ENCODE measurements at regions of chr15 and their contacts with region 1.

Region 1: DNA sequence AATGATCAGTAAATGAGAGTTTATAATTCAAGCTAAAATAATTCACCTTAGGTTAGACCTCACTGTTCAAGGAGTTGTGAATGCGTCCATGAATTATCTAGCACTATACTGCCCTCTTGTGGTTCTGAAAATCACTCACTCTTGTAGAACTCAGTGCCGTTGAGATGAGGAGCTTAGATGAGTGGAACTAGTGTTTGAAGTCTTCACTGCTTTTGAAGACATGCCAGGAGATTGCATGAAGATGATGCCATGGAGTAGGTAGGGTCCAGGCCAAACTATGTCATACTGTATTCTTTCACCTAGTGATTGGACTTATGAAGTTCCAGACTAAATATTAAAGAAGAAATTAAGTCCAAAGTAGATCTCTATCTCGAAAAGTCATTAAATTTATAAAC is 28.8 kb downstream of the LYSMD4 start:
- DNase-seq: peak in 2 of 6 donors; percentile 37 to 50
- ATAC-seq: peak; percentile 83 to 91 (median 86)
- H3K4me3 ChIP-seq: peak overlapping the region in 1 of 4 donors; percentile 11
- H3K27ac ChIP-seq: peak overlapping the region in 3 of 4 donors; percentile 76 to 82 (median 77)
- H3K4me1 ChIP-seq: peaks cover 5 to 27% (median 25%) of the 10 kb centered on the region in 3 donors
- H3K27me3 ChIP-seq: no peaks in the 10 kb centered on the region
- CTCF ChIP-seq: peak; percentile 62 to 74 (median 68)

Region 2: GRCh38 chr15:99282121-99282520 is 422.3 kb before region 1 on chr15:
- intact Hi-C with region 1: loop called in 1 of 3 experiments (anchors 10 kb)
- DNase-seq: no peak
- ATAC-seq: no peak
- H3K4me3 ChIP-seq: no peak overlapping the region
- H3K27ac ChIP-seq: no peak overlapping the region
- H3K4me1 ChIP-seq: no peaks in the 10 kb centered on the region
- H3K27me3 ChIP-seq: no peaks in the 10 kb centered on the region
- CTCF ChIP-seq: no peak

Region 3: DNA sequence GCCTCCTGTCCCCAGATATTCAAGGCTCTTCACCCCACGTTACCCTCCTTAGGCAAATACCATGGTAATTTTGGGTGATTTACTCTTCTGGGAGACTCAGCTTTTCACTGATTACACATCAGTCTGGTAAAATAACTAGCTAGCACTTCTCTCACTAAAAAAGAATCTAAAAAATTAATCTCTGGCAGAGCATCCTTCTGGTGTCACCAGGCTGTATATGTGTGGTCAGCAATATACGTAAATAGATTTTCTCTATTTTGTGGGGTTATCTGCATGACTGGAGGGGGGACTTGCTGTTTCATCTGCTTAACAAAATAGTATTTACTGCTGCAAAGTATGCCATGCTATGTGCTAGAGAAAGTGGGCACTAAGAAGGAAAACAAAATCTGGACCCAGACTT is 408.1 kb before region 1 on chr15:
- intact Hi-C with region 1: loop called in 1 of 3 experiments (anchors 10 kb)
- DNase-seq: no peak
- ATAC-seq: no peak
- H3K4me3 ChIP-seq: no peak overlapping the region
- H3K27ac ChIP-seq: no peak overlapping the region
- H3K4me1 ChIP-seq: no peaks in the 10 kb centered on the region
- H3K27me3 ChIP-seq: no peaks in the 10 kb centered on the region
- CTCF ChIP-seq: no peak

Region 4: DNA sequence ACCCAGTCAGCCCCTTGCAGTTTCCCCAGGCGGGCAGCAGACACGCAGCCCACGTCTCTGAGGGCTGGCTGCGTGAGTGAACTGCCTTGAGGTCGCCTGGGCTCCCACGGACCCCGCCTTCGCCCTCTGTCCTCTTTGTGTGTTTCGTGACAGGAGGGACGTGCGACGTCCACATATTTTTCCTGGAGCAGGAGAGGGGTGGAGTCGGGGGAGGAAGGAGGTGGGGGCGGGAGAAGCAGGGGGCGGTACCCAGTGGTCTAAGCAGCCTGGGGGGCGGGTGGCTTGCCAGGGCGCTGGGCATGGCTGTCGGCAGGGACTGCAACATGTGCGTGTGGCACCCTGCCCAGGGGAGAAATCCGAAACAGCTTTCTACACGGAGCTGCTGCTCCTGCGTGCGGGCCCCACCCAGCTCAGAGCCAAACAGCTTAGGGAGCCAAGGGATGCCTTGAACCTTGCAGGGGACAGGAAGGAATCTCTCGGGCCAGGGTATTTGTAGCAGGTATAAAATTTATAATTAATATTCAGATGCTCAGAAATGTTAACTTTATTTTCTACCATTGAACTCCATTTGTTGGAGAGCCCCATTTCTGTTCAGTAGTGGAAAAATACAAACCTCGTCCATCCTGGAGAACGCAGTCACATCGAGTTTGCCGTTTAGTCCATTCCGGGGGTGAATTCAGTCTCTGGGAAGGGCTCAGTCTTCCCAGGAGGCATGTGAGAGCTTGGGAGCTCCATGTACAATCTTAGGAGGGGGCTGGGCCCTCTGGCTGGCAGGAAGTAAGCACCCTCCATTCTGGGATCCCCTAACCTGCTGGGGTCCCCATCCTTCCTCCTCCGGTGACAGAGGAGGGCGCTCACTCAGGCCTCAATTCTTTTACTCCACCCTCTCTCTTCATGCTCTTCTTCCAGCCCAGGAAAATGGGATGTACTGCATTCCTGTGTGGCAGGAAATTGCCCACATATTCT is 217.8 kb before region 1 on chr15:
- intact Hi-C with region 1: no loop called
- DNase-seq: peak; percentile 58 to 83 (median 74)
- ATAC-seq: peak; percentile 82 to 91 (median 87)
- H3K4me3 ChIP-seq: peak overlapping the region; percentile 7 to 43 (median 23)
- H3K27ac ChIP-seq: peak overlapping the region in 2 of 4 donors; percentile 1 to 22
- H3K4me1 ChIP-seq: peaks cover 0 to 7% (median 0%) of the 10 kb centered on the region in 3 donors
- H3K27me3 ChIP-seq: no peaks in the 10 kb centered on the region
- CTCF ChIP-seq: no peak

Region 5: GRCh38 chr15:100191161-100191560 is 486.7 kb after region 1 on chr15:
- intact Hi-C with region 1: no loop called
- DNase-seq: no peak
- ATAC-seq: no peak
- H3K4me3 ChIP-seq: no peak overlapping the region
- H3K27ac ChIP-seq: no peak overlapping the region
- H3K4me1 ChIP-seq: no peaks in the 10 kb centered on the region
- H3K27me3 ChIP-seq: no peaks in the 10 kb centered on the region
- CTCF ChIP-seq: no peak